Activated CD4-positive, alpha-beta memory T cell treated with anti-CD3 and anti-CD28 coated beads for 36 hours (primary cell): ENCODE measurements at regions of chr4 and their contacts with region 1.

Region 1: DNA sequence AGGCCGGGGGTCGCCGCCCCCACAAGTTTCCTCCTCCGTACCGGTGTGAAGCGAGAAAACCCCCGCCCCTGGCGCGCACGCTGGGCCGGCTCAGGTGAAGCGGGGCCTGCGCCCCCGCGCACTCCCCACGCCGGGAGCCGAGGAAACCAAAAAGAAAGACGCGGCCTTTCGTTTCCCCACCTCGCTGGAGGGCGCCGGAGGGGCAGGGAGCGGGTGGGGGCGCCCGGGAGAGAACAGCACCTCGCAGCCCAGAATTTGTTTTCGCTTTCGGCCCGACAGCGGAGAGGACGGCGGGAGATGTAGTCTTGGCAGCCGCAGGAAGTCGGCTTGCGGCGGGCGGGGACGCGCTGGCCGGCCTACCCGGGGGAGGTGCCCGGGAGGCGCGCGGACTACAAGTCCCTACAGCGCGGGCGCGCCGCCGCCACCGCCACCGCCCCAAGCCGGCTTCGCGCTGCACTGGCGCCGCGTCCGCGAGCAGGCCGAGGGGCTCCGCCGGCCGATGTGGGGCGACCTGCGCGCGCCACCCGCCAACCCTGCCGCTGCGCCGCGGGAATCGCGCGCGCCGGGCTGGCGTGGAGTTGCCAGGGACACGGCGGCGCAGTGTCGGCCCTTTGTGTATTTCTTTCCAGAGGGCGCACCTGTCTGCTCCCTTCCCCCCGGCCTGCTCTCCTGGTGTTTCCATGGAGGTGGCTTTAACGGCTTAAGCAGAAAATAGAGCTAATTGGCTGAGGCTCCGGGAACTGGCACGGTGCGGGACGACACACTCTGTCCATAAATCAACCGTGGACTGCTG is at the start of gene OTUD4:
- DNase-seq: peak; percentile 97
- H3K4me3 Mint-ChIP-seq: peak within 1 kb of the TSS; percentile 96
- H3K27ac Mint-ChIP-seq: peak within 1 kb of the TSS; percentile 98
- H3K4me1 Mint-ChIP-seq: peaks cover 25% of the 10 kb centered on the region
- H3K27me3 Mint-ChIP-seq: no peaks in the 10 kb centered on the region
- total RNA-seq, gene OTUD4: 41.5 to 43.3 TPM

Region 2: GRCh38 chr4:143513306-143514168 is 1667.0 kb before region 1 on chr4 and contains the start of gene SMARCA5:
- CTCF ChIA-PET with region 1: no interaction called
- POLR2A ChIA-PET with region 1: no interaction called
- intact Hi-C with region 1: loop called (anchors 1 kb)
- DNase-seq: peak; percentile 97
- H3K4me3 Mint-ChIP-seq: peak within 1 kb of the TSS; percentile 97
- H3K27ac Mint-ChIP-seq: peak within 1 kb of the TSS; percentile 97
- H3K4me1 Mint-ChIP-seq: peaks cover 25% of the 10 kb centered on the region
- H3K27me3 Mint-ChIP-seq: no peaks in the 10 kb centered on the region
- total RNA-seq, gene SMARCA5: 67.0 to 69.3 TPM

Region 3: GRCh38 chr4:145097821-145098674 is 82.4 kb before region 1 on chr4 and contains the starts of genes ABCE1 and ANAPC10:
- CTCF ChIA-PET with region 1: interaction called, 9 read pairs
- POLR2A ChIA-PET with region 1: interaction called, 39 read pairs
- intact Hi-C with region 1: loop called (anchors 1 kb)
- DNase-seq: peak; percentile 97
- H3K4me3 Mint-ChIP-seq: peak within 1 kb of the TSS; percentile 87
- H3K27ac Mint-ChIP-seq: peak within 1 kb of the TSS; percentile 97
- H3K4me1 Mint-ChIP-seq: peaks cover 20% of the 10 kb centered on the region
- H3K27me3 Mint-ChIP-seq: no peaks in the 10 kb centered on the region
- total RNA-seq, gene ABCE1: 138 to 145 TPM
- total RNA-seq, gene ANAPC10: 28.2 to 28.3 TPM

Region 4: GRCh38 chr4:145154573-145154972 is 25.9 kb before region 1 on chr4:
- CTCF ChIA-PET with region 1: interaction called, 3 read pairs
- POLR2A ChIA-PET with region 1: no interaction called
- intact Hi-C with region 1: loop called (anchors 1 kb)
- DNase-seq: no peak
- H3K4me3 Mint-ChIP-seq: no peak overlapping the region
- H3K27ac Mint-ChIP-seq: no peak overlapping the region
- H3K4me1 Mint-ChIP-seq: peaks cover 6% of the 10 kb centered on the region
- H3K27me3 Mint-ChIP-seq: no peaks in the 10 kb centered on the region

Region 5: DNA sequence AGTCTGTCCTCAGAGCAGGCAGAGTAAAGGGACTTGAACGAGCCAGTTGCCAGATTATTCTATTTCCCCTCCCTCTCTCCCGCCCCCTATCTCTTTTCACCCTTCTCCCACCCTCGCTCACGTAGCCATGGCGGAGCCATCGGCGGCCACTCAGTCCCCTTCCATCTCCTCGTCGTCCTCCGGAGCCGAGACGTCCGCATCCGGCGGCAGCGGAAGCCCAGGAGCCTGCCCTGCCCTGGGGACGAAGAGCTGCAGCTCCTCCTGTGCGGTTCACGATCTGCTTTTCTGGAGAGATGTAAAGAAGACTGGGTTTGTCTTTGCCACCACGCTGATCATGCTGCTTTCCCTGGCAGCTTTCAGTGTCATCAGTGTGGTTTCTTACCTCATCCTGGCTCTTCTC is 194.9 kb after region 1 on chr4:
- CTCF ChIA-PET with region 1: no interaction called
- POLR2A ChIA-PET with region 1: no interaction called
- intact Hi-C with region 1: no loop called
- DNase-seq: no peak
- H3K4me3 Mint-ChIP-seq: no peak overlapping the region
- H3K27ac Mint-ChIP-seq: no peak overlapping the region
- H3K4me1 Mint-ChIP-seq: no peaks in the 10 kb centered on the region
- H3K27me3 Mint-ChIP-seq: no peaks in the 10 kb centered on the region

Region 6: DNA sequence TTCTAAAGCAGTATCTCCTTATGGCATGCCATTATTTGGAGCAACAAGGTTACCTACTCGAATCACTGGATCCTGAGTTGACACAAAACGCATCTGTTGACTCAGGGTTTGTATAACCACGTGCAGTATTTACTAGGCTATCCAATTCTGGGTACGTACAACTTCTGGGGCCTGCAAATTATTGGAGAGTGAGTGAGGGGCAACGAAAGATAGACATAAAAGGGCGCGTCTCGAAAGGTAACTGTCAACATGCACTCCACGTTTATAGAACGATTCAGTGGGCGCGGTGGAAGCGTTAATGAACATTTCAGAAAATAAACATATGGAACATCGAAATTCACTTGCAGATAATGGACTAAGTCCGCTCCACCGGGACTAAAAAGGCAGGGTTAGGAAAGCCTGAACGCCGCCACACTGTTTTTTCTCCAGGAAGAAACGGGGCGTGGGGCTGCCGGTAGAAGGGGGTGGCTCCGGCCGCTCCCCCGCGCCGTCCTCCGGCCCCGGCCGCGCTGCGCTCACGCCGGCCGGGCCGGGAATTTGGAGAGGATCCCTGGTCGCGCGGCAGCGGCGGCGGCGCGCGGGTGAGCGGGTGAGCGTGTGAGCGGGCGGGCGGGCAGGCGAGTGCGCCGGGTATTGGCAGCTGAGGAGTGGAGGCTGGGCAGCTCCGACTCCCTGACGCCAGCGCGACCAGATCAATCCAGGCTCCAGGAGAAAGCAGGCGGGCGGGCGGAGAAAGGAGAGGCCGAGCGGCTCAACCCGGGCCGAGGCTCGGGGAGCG is 300.9 kb after region 1 on chr4 and contains the start of gene SMAD1:
- CTCF ChIA-PET with region 1: no interaction called
- POLR2A ChIA-PET with region 1: no interaction called
- intact Hi-C with region 1: loop called (anchors 1 kb)
- DNase-seq: peak; percentile 53
- H3K4me3 Mint-ChIP-seq: peak within 1 kb of the TSS; percentile 66
- H3K27ac Mint-ChIP-seq: no peak within 1 kb of the TSS
- H3K4me1 Mint-ChIP-seq: peaks cover 8% of the 10 kb centered on the region
- H3K27me3 Mint-ChIP-seq: peaks cover 38% of the 10 kb centered on the region
- total RNA-seq, gene SMAD1: 2.8 to 2.9 TPM

Region 7: DNA sequence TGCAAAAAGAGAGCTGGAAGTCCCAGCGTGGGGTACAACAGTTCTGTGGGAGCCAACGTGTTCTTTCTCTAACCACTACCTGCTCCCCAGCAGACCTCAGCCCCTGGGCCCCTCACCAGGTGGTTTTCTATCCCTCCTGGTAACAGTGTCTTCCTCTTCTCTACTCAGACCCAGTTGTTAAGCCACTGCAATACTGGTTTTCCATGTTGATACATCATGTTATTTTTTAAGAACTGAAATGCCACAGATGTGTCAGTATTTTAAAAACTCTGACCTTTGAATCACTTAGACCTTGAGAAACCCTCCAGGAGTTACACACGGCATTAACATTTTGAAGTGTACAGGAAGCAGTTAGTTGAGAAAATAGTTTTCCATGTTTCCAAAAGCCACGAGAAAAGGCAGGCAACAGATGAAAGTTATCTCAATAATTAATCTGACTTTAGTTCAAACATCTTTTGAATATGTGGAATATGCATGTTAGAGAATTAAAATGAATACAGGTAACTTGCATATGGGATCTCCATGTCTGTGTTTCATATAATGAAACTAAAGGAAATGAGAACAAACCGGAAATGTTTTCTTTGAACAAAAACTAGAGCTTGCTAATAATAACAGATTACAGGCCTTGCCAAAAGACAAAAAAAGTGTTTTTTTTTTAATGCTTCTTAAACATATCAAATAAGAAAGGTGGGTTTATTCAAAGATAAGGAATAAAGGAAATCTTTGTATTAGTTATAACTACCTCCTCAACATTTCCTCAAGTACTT is 649.3 kb after region 1 on chr4:
- CTCF ChIA-PET with region 1: no interaction called
- POLR2A ChIA-PET with region 1: no interaction called
- intact Hi-C with region 1: loop called (anchors 5 kb)
- DNase-seq: peak; percentile 73
- H3K4me3 Mint-ChIP-seq: peak overlapping the region; percentile 46
- H3K27ac Mint-ChIP-seq: peak overlapping the region; percentile 71
- H3K4me1 Mint-ChIP-seq: peaks cover 46% of the 10 kb centered on the region
- H3K27me3 Mint-ChIP-seq: no peaks in the 10 kb centered on the region

Region 8: DNA sequence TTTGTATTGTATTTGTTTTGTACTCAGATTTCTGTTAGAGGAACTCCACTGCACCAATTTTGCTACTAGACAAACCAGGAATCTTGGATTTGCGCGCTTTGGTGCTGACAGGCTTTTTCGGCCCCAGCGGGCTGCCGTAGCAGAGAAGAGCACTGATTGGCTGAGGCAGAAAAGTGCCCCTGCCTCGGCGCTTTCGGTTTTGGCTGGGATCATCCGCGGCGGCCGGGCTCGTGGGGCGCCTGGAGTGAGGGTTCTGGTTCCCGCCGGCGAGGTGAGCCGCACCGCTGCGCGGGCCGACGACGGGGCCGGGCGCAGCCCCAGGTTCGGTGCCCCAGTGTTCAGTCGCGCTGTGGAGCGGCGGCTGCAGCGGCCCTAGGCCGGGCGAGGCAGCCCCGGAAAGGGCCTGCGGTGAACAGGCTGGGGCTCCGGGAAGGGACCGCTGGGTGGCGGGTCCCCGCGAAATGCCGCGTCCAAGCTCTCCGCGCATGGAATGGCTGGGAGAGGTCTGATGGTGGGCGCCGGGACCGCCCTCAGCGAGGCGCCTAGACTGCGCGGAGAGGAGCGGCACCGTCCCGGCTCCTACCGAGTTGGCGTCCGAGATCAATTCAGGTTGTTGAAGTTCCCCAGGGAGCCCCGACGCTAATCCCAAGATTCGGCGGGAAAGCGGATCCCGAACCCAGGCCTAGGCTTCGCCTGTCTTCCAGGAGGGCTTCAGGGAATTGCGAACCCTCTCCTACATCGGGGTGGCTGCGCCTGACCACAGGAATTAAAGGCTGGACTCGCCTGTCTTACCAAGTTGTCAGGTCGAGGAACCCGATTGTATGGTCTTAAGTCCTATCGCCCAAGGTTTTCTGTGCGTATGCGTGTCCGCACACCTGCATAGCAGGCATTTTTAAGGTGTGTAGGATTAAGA is 995.3 kb after region 1 on chr4 and contains the start of gene LSM6:
- CTCF ChIA-PET with region 1: no interaction called
- POLR2A ChIA-PET with region 1: no interaction called
- intact Hi-C with region 1: loop called (anchors 10 kb)
- DNase-seq: peak; percentile 89
- H3K4me3 Mint-ChIP-seq: peak within 1 kb of the TSS; percentile 83
- H3K27ac Mint-ChIP-seq: peak within 1 kb of the TSS; percentile 87
- H3K4me1 Mint-ChIP-seq: peaks cover 42% of the 10 kb centered on the region
- H3K27me3 Mint-ChIP-seq: no peaks in the 10 kb centered on the region
- total RNA-seq, gene LSM6: 64.2 to 65.5 TPM